Endothelial cell of umbilical vein (primary cell): ENCODE measurements at regions of chr10 and their contacts with region 1.

Region 1: DNA sequence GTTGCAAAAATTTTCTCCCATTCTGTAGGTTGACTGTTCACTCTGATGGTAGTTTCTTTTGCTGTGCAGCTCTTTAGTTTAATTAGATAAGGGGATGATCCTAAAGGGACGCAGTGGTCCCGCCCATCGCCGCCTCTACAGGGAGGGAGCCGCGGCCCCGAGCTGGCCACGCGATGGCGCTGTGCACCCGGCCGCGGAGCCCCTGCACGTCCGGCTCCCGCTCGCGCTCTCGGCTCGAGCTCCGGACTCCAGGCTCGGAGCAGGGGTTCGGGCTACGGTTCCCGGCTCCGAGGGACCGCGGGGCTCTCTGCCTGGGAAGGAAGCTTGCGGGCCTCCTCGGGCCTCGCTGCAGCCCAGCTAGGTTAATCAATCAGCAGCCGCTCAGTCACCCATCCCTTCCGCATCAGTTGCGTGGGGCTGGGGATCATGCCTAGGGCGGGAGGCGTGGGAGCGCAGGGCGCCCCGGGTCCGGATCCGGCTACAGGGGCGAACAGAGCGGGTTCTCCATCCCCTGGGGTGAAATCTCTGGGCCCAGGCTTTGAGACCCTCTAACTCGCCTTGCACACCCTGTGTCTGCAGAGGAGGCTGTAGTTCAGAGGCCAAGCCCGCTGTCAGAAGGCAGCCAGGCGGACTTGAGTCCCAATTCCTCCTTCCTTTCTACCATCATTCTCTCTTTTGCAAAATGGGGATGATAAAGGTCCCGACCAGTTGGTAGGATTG is 97.9 kb downstream of the WDR11 start:
- DNase-seq: peak; percentile 66
- H3K4me3 ChIP-seq: peak overlapping the region in 2 of 3 experiments; percentile 31 to 36
- H3K27ac ChIP-seq: no peak overlapping the region
- H3K4me1 ChIP-seq: peaks cover 9% of the 10 kb centered on the region
- H3K27me3 ChIP-seq: peaks cover 21 to 28% of the 10 kb centered on the region in 2 experiments
- CTCF ChIP-seq: peak; percentile 85 to 91
- POLR2A ChIP-seq: no peak

Region 2: GRCh38 chr10:120962756-120963593 is 13.9 kb after region 1 on chr10:
- CTCF ChIA-PET with region 1: interaction called, 16 read pairs
- POLR2A ChIA-PET with region 1: no interaction called
- dilution Hi-C with region 1: no loop called
- intact Hi-C with region 1: no loop called
- DNase-seq: no peak
- H3K4me3 ChIP-seq: no peak overlapping the region
- H3K27ac ChIP-seq: no peak overlapping the region
- H3K4me1 ChIP-seq: no peaks in the 10 kb centered on the region
- H3K27me3 ChIP-seq: no peaks in the 10 kb centered on the region
- CTCF ChIP-seq: no peak
- POLR2A ChIP-seq: no peak

Region 3: GRCh38 chr10:121033366-121033765 is 84.3 kb after region 1 on chr10:
- CTCF ChIA-PET with region 1: no interaction called
- POLR2A ChIA-PET with region 1: no interaction called
- dilution Hi-C with region 1: no loop called
- intact Hi-C with region 1: no loop called
- DNase-seq: no peak
- H3K4me3 ChIP-seq: no peak overlapping the region
- H3K27ac ChIP-seq: no peak overlapping the region
- H3K4me1 ChIP-seq: no peaks in the 10 kb centered on the region
- H3K27me3 ChIP-seq: no peaks in the 10 kb centered on the region
- CTCF ChIP-seq: no peak
- POLR2A ChIP-seq: no peak

Region 4: GRCh38 chr10:121608469-121609190 is 659.6 kb after region 1 on chr10:
- CTCF ChIA-PET with region 1: interaction called, 13 read pairs
- POLR2A ChIA-PET with region 1: no interaction called
- dilution Hi-C with region 1: no loop called
- intact Hi-C with region 1: loop called (anchors 1 kb)
- DNase-seq: peak; percentile 24
- H3K4me3 ChIP-seq: no peak overlapping the region
- H3K27ac ChIP-seq: no peak overlapping the region
- H3K4me1 ChIP-seq: no peaks in the 10 kb centered on the region
- H3K27me3 ChIP-seq: peaks cover 7 to 11% of the 10 kb centered on the region in 2 experiments
- CTCF ChIP-seq: peak; percentile 72 to 80
- POLR2A ChIP-seq: no peak

Region 5: GRCh38 chr10:121696854-121697253 is 747.8 kb after region 1 on chr10:
- CTCF ChIA-PET with region 1: interaction called, 7 read pairs
- POLR2A ChIA-PET with region 1: no interaction called
- dilution Hi-C with region 1: no loop called
- intact Hi-C with region 1: loop called (anchors 1 kb)
- DNase-seq: peak; percentile 7
- H3K4me3 ChIP-seq: no peak overlapping the region
- H3K27ac ChIP-seq: no peak overlapping the region
- H3K4me1 ChIP-seq: no peaks in the 10 kb centered on the region
- H3K27me3 ChIP-seq: no peaks in the 10 kb centered on the region
- CTCF ChIP-seq: peak; percentile 30 to 32
- POLR2A ChIP-seq: no peak